ENCODE measurements at regions of chr10 and their contacts with region 1.

Region 1: GRCh38 chr10:70363971-70364771 is 18.3 kb downstream of the LRRC20 start:
- DNase-seq: peak; percentile 95 to 96
- H3K4me3 ChIP-seq: no peak overlapping the region
- H3K27ac ChIP-seq: peak overlapping the region; percentile 80 to 93 (median 88)
- H3K4me1 ChIP-seq: peaks cover 10 to 17% of the 10 kb centered on the region in 2 donors
- H3K27me3 ChIP-seq: no peaks in the 10 kb centered on the region
- CTCF ChIP-seq: peak; percentile 86 to 99 (median 93)
- POLR2A ChIP-seq: peak in 1 of 2 donors; percentile 43

Region 2: DNA sequence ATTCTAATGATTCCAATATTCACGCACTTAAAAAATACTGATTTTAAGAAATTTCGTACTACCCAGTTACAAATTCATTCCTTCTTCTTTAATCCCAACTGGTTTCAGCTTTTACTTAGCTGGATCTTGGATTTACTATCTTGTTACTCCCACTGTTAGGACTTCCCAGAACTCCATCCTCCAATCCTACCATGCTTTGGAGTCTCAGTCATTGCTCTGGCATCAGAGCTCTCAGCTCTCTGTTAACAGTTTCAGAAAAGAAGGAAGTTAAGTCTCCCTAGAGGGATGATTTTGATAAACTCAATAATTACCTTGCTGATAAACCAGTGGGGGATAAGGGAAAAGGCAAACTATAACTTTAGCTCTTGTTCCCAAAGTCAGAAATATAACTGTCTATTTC is 140.4 kb before region 1 on chr10:
- intact Hi-C with region 1: loop called (anchors 2 kb)
- DNase-seq: no peak
- H3K4me3 ChIP-seq: no peak overlapping the region
- H3K27ac ChIP-seq: peak overlapping the region in 1 of 3 donors; percentile 33
- H3K4me1 ChIP-seq: peaks cover 16 to 31% of the 10 kb centered on the region in 2 donors
- H3K27me3 ChIP-seq: no peaks in the 10 kb centered on the region
- CTCF ChIP-seq: no peak
- POLR2A ChIP-seq: no peak

Region 3: GRCh38 chr10:70267161-70267933 is 96.8 kb before region 1 on chr10:
- intact Hi-C with region 1: loop called (anchors 5 kb)
- DNase-seq: no peak
- H3K4me3 ChIP-seq: no peak overlapping the region
- H3K27ac ChIP-seq: no peak overlapping the region
- H3K4me1 ChIP-seq: no peaks in the 10 kb centered on the region
- H3K27me3 ChIP-seq: no peaks in the 10 kb centered on the region
- CTCF ChIP-seq: no peak
- POLR2A ChIP-seq: no peak

Measured in thyroid gland (tissue), 4 donors.